ENCODE measurements at regions of chr13 and their contacts with region 1.

Region 1: GRCh38 chr13:39144941-39145533 is 106.8 kb downstream of the NHLRC3 start:
- DNase-seq: peak; percentile 41
- ATAC-seq: peak; percentile 72
- H3K4me3 ChIP-seq: no peak overlapping the region
- H3K27ac ChIP-seq: no peak overlapping the region
- H3K4me1 ChIP-seq: no peaks in the 10 kb centered on the region
- H3K27me3 ChIP-seq: peaks cover 31% of the 10 kb centered on the region
- CTCF ChIP-seq: peak; percentile 24 to 73 (median 70); a peak in 5 of 6 replicates
- POLR2A ChIP-seq: no peak
- RAD21 ChIP-seq: peak; percentile 52

Region 2: GRCh38 chr13:39263033-39263432 is 118.0 kb after region 1 on chr13:
- CTCF ChIA-PET with region 1: no interaction called
- POLR2A ChIA-PET with region 1: no interaction called
- RAD21 ChIA-PET with region 1: no interaction called
- intact Hi-C with region 1: loop called (anchors 5 kb)
- DNase-seq: peak; percentile 24
- ATAC-seq: peak; percentile 91
- H3K4me3 ChIP-seq: no peak overlapping the region
- H3K27ac ChIP-seq: no peak overlapping the region
- H3K4me1 ChIP-seq: no peaks in the 10 kb centered on the region
- H3K27me3 ChIP-seq: peaks cover 13% of the 10 kb centered on the region
- CTCF ChIP-seq: peak; percentile 13 to 70 (median 63); a peak in 4 of 6 replicates
- POLR2A ChIP-seq: no peak
- RAD21 ChIP-seq: peak; percentile 45; the same call in 1 of the 2 replicates

Region 3: DNA sequence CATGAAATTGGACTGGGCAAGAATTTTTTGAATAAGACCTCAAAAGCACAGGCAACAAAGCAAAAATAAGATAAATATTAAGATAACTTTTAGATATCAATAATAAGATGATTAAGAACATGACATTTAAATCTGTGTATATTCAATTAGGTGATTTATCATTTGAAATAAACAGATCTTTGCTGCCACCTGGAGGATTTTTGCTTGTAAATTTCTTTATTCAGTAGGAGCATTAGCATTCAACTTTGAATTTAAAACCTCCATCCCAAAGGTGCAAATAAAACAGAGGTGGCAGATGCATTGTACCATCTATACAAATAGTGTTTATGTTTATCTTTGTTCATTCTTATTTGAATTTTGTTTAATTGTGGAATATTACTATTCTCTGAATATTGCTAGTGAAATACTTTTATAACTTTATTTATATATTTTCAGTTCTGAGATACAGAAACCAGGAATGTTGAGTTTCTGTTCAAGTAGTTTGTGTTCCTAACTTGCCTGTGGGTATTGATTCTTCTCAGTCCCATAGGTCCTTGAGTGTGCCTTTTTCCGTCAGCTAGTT is 531.4 kb after region 1 on chr13:
- CTCF ChIA-PET with region 1: no interaction called
- POLR2A ChIA-PET with region 1: no interaction called
- RAD21 ChIA-PET with region 1: no interaction called
- intact Hi-C with region 1: loop called (anchors 2 kb)
- DNase-seq: peak; percentile 40
- ATAC-seq: peak; percentile 49; the same call in 1 of the 2 replicates
- H3K4me3 ChIP-seq: no peak overlapping the region
- H3K27ac ChIP-seq: no peak overlapping the region
- H3K4me1 ChIP-seq: no peaks in the 10 kb centered on the region
- H3K27me3 ChIP-seq: no peaks in the 10 kb centered on the region
- CTCF ChIP-seq: peak; percentile 21 to 48 (median 28); a peak in 3 of 6 replicates
- POLR2A ChIP-seq: no peak
- RAD21 ChIP-seq: peak; percentile 42